Right ventricle myocardium superior (tissue), 1 donor: ENCODE measurements at regions of chr18 and their contacts with region 1.

Region 1: DNA sequence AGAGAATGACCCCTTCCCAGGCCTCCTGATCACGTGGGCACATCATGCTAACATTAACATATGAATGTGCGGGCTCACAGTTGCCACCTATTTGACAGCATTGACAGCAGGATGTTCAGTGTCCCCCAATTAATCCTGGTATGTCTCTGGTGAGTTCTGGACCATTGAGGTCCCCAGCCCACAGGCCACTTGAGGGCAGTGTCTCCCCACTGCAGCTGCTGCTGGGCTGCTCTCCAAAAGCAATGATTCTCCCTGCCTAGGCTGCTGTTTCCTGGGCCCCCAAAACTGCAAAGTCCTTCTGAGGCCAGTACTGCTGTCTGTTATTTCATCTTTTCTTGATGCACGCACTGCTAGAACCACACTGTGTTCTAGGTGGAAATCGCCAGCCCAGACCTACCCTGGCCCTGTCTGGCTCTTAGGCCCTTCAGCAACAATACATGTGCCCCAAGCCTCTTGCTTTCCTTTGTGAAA is 52.7 kb upstream of the MAPK4 start:
- DNase-seq: peak; percentile 59
- ATAC-seq: peak; percentile 95

Region 2: DNA sequence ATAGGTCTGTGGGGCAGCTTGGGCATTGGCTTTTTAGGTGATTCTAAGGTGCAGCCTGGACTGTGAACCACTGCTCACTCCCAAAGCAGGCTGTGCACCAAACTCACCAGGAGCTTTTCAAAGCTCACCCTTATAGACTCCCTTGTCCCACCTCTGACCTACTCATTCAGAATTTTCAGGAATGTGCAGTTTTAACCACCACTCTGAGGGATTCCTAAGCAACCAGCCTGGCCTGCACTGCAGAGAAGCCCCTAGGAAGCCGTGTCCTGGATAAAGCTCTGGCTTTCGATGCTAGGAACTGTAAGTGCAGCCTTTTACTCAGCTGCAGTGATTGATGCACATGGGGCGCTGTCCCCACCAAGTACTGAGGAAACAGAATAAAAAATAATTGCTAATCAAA is 279.7 kb after region 1 on chr18:
- intact Hi-C with region 1: loop called (anchors 2 kb)
- DNase-seq: no peak
- ATAC-seq: no peak